ENCODE measurements at regions of chr1 and their contacts with region 1.

Region 1: GRCh38 chr1:66725885-66726665 is 26.2 kb upstream of the DYNLT5 start:
- DNase-seq: peak; percentile 24
- H3K4me3 ChIP-seq: no peak overlapping the region
- CTCF ChIP-seq: peak; percentile 78

Region 2: DNA sequence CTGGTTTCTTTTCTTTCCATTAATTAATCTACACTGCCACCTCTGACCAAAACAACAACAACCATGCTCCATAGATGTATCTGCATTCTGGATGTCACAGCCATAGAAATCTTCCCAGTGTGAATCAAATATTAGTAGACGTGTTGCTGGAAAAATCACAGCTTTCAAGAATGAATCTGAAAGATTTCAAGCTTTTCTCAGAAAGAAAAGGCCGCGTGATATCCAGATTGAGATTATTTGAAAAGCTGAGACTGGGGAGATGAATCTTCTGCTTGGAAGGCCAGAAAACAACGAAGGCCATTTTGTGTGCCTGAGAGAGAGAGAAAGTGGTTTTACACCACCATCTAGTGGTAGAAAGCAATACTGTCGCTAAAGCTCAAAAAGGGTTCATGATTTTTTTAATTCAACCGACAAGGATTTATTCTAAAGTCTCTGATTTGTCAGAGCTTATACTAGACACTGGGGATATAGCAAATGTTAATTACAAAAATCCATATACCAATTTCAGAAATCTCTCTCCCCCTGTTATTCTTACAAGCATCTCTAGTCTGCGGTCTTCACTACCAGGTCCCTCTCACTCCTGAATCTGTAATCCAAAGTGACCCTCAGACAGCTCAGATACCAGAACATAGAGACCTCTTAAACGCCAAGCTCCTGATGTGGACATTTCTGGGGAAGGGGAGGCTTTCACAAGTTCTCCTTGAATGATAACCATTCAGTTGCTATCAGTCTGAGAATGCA is 279.6 kb before region 1 on chr1:
- CTCF ChIA-PET with region 1: interaction called, 16 read pairs
- POLR2A ChIA-PET with region 1: no interaction called
- DNase-seq: peak; percentile 26
- H3K4me3 ChIP-seq: no peak overlapping the region
- CTCF ChIP-seq: peak; percentile 60

Region 3: GRCh38 chr1:66533804-66534740 is 192.0 kb before region 1 on chr1 and contains the start of gene SGIP1:
- CTCF ChIA-PET with region 1: interaction called, 12 read pairs
- POLR2A ChIA-PET with region 1: no interaction called
- DNase-seq: peak; percentile 38
- H3K4me3 ChIP-seq: peak within 1 kb of the TSS; percentile 65
- CTCF ChIP-seq: no peak

Region 4: DNA sequence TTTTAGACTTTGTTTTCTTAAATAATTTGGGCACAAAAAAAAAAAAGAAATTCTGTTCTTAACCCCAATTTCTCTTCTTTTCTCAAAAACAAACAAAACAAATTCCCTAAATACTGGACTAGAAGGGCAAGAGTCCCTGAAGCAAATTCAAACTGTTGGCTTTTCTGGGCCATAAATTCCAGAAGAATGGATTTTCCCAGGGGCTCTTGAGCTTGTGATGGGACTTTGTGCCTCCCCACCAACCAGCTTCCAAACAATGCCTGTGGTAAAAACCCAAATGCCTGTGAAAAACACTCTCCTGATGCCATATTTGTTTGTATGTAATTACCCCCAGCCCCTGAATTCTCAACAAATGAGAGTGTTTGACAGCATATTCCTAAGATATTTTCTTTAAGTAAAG is 136.7 kb before region 1 on chr1:
- CTCF ChIA-PET with region 1: no interaction called
- POLR2A ChIA-PET with region 1: no interaction called
- DNase-seq: no peak
- H3K4me3 ChIP-seq: no peak overlapping the region
- CTCF ChIP-seq: no peak

Region 5: GRCh38 chr1:66705110-66705509 is 21.0 kb before region 1 on chr1:
- CTCF ChIA-PET with region 1: interaction called, 47 read pairs
- POLR2A ChIA-PET with region 1: no interaction called
- DNase-seq: peak; percentile 29
- H3K4me3 ChIP-seq: no peak overlapping the region
- CTCF ChIP-seq: no peak

Region 6: GRCh38 chr1:66739401-66740157 is 13.5 kb after region 1 on chr1:
- CTCF ChIA-PET with region 1: interaction called, 43 read pairs
- POLR2A ChIA-PET with region 1: no interaction called
- DNase-seq: no peak
- H3K4me3 ChIP-seq: no peak overlapping the region
- CTCF ChIP-seq: no peak

Measured in AG04449 (cell line).